Lower leg skin (tissue), 4 donors: ENCODE measurements at regions of chr18 and their contacts with region 1.

Region 1: DNA sequence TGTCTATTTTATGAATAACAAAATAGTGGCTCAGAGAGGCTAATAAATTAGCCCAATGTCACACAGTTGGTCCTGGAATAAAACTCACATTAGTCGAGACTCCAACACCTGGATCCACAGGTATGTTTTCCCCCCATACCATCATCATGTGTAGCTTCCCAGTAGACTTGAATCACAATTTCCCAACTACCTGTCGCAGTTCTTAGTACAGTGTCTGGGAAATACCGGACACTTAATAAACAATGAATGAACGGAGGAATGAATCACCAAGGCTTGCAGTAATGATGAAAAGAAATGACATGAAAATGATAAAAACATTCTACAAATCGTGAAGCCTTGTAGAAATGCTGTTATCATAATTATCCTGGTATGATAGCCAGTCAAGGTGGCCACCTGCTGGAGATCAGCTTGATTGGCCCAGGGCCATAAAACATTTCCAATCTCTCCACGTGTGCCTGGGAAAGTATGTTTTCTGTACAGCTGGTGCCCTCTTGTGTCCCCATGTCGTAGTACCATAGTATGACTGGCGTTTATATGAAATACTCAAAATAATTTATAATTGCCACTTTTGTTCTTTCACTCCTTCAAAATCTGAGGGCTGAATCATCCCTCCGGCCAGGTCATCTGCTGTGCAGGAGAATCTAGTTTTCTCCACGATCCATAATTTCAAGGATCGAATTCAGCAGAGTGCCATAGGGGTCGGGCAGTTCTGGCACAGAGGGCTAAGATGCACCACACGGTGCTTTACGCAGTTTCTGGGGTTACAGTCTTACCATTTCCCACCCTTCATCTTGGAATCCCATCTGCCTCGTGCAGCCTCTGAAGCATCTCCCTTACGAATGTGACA is 95.4 kb downstream of the LAMA1 start:
- DNase-seq: no peak
- H3K4me3 ChIP-seq: no peak overlapping the region
- CTCF ChIP-seq: no peak
- POLR2A ChIP-seq: no peak

Region 2: DNA sequence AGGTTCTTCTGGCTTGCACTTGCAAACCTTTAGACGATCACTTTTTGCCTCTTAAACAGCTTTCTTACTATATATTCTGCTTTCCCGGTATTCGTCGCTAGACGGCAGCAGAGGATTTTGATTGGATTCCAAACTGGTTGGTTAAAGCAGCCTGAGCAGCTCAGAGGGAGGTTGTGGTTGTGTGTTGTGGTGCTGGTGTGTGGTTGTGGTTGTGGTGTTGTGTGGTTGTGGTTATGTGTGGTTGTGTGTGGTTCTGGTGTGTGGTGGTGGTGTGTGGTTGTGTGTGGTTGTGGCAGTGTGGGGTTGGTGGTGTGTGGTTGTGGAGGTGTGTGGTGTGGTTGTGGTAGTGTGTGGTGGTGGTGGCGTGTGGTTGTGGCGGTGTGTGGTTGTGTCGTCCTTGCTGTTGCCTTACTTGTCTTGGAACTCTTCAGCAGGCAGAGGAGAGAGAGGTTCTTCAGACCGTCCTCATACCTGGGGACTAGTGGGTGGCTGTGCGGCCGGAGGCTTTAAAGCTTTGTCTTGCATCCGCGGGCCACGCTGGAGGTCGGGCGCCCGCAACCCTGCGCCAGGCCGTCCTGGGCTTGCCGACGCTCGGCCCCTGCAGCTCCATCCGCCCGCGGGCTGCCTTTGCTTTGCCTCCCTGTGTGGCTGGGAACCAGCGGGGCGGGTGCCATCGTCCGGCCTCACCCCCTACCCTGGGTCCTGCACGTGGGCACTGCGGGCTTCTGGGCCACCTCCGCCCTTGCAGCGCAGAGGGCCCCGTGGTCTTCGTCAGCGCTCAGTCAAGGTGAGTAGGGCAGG is 101.9 kb before region 1 on chr18:
- intact Hi-C with region 1: loop called (anchors 10 kb)
- DNase-seq: peak in 1 of 2 donors; percentile 48
- H3K4me3 ChIP-seq: no peak overlapping the region
- CTCF ChIP-seq: peak in 1 of 3 donors; percentile 56
- POLR2A ChIP-seq: no peak

Region 3: DNA sequence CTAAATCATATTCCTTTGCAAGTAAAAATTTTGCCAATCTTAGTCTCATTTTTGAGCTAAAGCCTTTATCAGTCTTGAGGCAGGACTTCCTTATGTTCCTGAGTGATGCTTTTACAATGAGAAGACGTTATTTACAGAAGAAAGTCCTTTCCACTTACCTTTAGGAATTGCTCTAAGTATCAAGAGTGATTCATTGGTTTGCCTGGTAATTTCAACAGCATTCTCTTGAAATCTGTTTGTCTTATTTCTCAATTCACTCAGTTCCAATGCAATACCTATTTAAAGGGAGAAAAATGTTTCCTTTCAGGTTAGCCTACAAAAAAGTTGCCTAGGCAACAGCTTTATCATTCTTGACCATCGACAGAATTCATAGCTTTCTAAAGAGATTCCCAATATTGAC is 41.9 kb before region 1 on chr18:
- intact Hi-C with region 1: loop called (anchors 1 kb)
- DNase-seq: no peak
- H3K4me3 ChIP-seq: no peak overlapping the region
- CTCF ChIP-seq: no peak
- POLR2A ChIP-seq: no peak

Region 4: DNA sequence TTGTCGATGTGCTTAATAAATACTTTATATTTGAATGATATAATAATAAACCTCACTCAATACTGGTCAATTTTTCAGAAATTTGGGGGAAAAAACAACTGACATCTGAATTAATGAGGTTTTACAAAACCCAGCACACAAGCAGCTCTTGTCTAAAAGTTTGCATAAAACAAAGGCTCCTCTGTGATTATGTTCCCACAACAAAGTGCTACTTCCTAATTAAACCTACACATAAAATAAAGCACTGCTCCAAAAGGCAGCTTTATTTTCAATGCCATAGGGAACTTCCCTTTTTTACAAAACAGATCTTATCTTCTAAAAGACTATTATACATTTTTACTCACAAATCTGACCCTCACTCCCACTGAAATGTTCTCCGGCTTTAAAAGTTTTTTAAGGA is 48.2 kb after region 1 on chr18:
- intact Hi-C with region 1: loop called (anchors 1 kb)
- DNase-seq: no peak
- H3K4me3 ChIP-seq: no peak overlapping the region
- CTCF ChIP-seq: no peak
- POLR2A ChIP-seq: no peak